ENCODE measurements at regions of chr5 and their contacts with region 1.

Region 1: GRCh38 chr5:10424124-10424731 is 17.5 kb upstream of the ROPN1L start:
- DNase-seq: peak; percentile 36
- ATAC-seq: peak; percentile 60
- H3K4me3 Mint-ChIP-seq: no peak overlapping the region
- H3K27ac Mint-ChIP-seq: no peak overlapping the region
- H3K4me1 Mint-ChIP-seq: peaks cover 22% of the 10 kb centered on the region
- H3K27me3 Mint-ChIP-seq: no peaks in the 10 kb centered on the region

Region 2: GRCh38 chr5:10358999-10359398 is 65.2 kb before region 1 on chr5:
- CTCF ChIA-PET with region 1: interaction called, 11 read pairs
- POLR2A ChIA-PET with region 1: no interaction called
- DNase-seq: no peak
- ATAC-seq: no peak
- H3K4me3 Mint-ChIP-seq: no peak overlapping the region
- H3K27ac Mint-ChIP-seq: no peak overlapping the region
- H3K4me1 Mint-ChIP-seq: peaks cover 25% of the 10 kb centered on the region
- H3K27me3 Mint-ChIP-seq: no peaks in the 10 kb centered on the region

Measured in activated CD8-positive, alpha-beta T cell treated with anti-CD3 and anti-CD28 coated beads, Interleukin-2, amount 10 ng/mL, durations not matched to agents 7 days and 5 days (primary cell).